ENCODE measurements at regions of chr6 and their contacts with region 1.

Region 1: DNA sequence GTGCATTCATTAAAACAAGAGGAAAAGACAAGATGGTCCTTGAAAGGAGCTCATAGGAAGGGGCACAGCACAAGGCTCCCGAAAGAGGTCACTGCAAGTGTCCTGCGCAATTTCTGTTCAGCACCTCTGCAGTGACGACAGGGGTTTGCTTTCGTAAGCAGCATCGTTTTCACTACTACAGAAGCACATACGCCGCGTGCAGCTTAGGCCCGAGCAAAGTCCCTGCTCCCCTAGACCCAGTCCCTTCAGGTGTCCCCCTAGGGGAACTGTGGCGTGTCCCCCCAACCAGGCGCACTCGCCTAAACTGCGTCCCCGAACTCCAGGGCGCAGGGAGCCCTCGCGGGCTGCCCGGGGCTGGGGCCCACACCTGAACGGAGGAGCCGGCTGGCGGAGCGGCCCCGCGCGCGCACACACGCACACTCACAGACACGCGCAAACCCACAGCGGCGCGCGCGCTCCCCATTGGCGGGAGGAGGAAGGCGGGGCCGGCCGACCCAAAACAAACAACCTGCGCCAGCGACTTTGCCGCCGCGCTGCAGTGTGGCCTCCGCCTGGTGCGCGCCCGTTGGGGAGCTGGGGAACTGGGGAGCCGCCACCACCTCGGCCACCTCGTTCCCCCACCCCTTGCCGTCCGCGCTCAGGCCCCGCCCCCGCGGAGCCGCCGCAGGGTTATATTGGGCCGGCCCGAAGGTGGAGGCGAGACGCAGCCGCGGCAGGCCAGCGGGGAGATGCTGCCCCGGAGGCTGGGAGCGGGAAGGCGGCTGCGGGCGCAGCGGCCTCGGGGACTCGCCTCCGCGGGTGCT is at the start of gene FOXQ1:
- DNase-seq: no peak
- ATAC-seq: peak; percentile 75
- H3K4me3 ChIP-seq: peak within 1 kb of the TSS; percentile 56 to 81
- H3K27ac ChIP-seq: peak within 1 kb of the TSS; percentile 66; the same call in 1 of the 2 replicates
- H3K4me1 ChIP-seq: peaks cover 24% of the 10 kb centered on the region
- H3K27me3 ChIP-seq: no peaks in the 10 kb centered on the region
- CTCF ChIP-seq: peak; percentile 22; the same call in 1 of the 2 replicates
- total RNA-seq, gene FOXQ1: 11.7 TPM

Region 2: GRCh38 chr6:1082285-1082935 is 229.2 kb before region 1 on chr6:
- CTCF ChIA-PET with region 1: interaction called, 12 read pairs
- POLR2A ChIA-PET with region 1: no interaction called
- in situ Hi-C with region 1: no loop called
- intact Hi-C with region 1: no loop called
- DNase-seq: no peak
- ATAC-seq: no peak
- H3K4me3 ChIP-seq: no peak overlapping the region
- H3K27ac ChIP-seq: no peak overlapping the region
- H3K4me1 ChIP-seq: no peaks in the 10 kb centered on the region
- H3K27me3 ChIP-seq: no peaks in the 10 kb centered on the region
- CTCF ChIP-seq: no peak

Region 3: DNA sequence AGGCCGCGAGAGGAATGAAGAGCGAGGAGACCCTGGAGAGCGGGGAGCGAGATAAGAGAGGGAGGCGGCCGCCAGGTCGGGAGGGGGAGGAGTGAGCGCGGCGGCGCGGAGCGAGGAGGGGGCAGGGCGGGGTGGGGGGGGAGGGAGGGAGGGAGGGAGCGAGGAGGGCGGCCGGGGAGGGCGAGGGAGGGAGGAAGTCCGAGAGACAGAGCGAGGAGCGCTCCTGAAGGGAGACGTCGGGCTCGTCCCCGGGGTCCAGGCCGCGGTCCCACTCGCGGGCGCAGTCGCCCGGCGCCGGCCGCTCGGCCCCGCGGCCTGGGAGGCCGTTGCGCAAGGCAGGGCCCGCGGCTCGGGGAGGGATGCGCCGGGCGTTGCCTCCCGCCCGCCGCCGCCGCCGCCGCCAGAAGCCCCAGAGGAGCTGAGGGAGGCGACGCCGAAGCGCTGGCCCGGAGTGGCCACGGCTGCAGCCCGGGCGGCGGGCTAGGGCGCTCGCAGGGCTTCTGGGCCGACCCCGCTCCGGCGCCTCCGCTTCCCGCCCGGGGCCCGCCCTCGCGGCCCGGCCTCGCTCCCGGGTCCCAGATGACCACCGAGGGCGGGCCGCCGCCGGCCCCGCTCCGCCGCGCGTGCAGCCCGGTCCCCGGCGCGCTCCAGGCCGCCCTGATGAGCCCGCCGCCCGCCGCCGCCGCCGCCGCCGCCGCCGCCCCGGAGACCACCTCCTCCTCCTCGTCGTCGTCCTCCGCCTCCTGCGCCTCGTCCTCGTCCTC is 78.0 kb after region 1 on chr6 and contains the start of gene FOXF2:
- CTCF ChIA-PET with region 1: no interaction called
- POLR2A ChIA-PET with region 1: no interaction called
- in situ Hi-C with region 1: no loop called
- intact Hi-C with region 1: loop called (anchors 5 kb)
- DNase-seq: no peak
- ATAC-seq: peak; percentile 57
- H3K4me3 ChIP-seq: peak within 1 kb of the TSS; percentile 52 to 64
- H3K27ac ChIP-seq: peak within 1 kb of the TSS; percentile 63
- H3K4me1 ChIP-seq: peaks cover 10% of the 10 kb centered on the region
- H3K27me3 ChIP-seq: no peaks in the 10 kb centered on the region
- CTCF ChIP-seq: no peak
- total RNA-seq, gene FOXF2: 12.7 TPM